ENCODE measurements at regions of chr4 and their contacts with region 1.

Region 1: GRCh38 chr4:15771216-15772058 is 6.7 kb upstream of the CD38 start:
- DNase-seq: peak; percentile 49
- ATAC-seq: peak; percentile 83
- H3K4me3 Mint-ChIP-seq: peak overlapping the region; percentile 1
- H3K27ac Mint-ChIP-seq: peak overlapping the region; percentile 47
- H3K4me1 Mint-ChIP-seq: peaks cover 65% of the 10 kb centered on the region
- H3K27me3 Mint-ChIP-seq: peaks cover 18% of the 10 kb centered on the region
- CTCF ChIP-seq: no peak

Region 2: GRCh38 chr4:15488658-15489470 is 282.6 kb before region 1 on chr4:
- CTCF ChIA-PET with region 1: no interaction called
- POLR2A ChIA-PET with region 1: no interaction called
- intact Hi-C with region 1: no loop called
- DNase-seq: no peak
- ATAC-seq: no peak
- H3K4me3 Mint-ChIP-seq: no peak overlapping the region
- H3K27ac Mint-ChIP-seq: no peak overlapping the region
- H3K4me1 Mint-ChIP-seq: no peaks in the 10 kb centered on the region
- H3K27me3 Mint-ChIP-seq: no peaks in the 10 kb centered on the region
- CTCF ChIP-seq: no peak

Region 3: GRCh38 chr4:15756361-15756861 is 15.0 kb before region 1 on chr4:
- CTCF ChIA-PET with region 1: interaction called, 112 read pairs
- POLR2A ChIA-PET with region 1: interaction called, 22 read pairs
- intact Hi-C with region 1: loop called (anchors 2 kb)
- DNase-seq: peak; percentile 90
- ATAC-seq: peak; percentile 84
- H3K4me3 Mint-ChIP-seq: peak overlapping the region; percentile 66
- H3K27ac Mint-ChIP-seq: peak overlapping the region; percentile 92
- H3K4me1 Mint-ChIP-seq: peaks cover 47% of the 10 kb centered on the region
- H3K27me3 Mint-ChIP-seq: no peaks in the 10 kb centered on the region
- CTCF ChIP-seq: peak; percentile 73